Head of caudate nucleus (tissue), 42 donors: ENCODE measurements at regions of chr7 and their contacts with region 1.

Region 1: DNA sequence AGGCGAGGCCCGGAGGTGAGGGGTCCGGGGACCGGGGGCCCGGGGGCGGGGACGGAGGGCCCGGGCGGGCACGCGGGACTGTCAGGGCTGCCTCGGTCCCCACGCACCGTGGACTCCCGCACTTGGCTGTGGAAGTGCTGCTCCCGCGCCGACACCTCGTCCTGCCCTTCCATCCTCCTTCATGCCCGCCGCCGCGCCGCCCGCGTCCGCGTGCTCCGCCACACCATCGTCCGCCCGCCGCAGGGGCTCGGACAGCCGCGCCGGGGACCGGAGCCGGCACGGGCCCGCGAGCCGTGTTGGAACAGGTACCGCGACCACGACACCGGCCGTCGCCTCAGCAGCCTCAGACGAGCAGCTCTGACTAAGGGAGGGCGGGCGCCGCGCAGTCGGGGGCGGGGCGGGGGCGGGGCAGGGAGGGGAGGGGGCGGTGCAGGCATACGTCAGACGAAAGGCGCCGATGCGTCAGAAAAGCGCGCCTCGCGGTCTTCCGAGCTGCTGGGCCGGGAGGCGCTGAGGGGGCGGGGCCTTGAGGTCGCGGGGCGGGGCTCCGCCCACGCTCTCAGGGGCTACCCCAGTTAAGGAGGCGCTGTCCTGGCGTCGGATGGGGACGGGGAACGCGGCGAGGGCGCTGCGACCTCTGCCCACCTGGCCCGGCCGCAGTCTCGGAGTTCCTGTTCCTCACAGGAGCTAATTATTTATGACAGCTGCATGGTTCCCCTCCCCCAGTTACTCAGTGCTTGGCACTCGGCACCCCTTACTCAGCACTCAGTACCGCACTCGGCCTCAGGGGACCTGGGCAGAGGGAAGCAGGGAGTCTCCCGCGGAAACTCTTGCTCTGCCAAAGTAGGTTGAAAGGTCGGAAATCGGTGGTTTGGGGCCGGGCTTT is at the start of gene LMBR1:
- DNase-seq: peak; percentile 83 to 97 (median 94)

Region 2: GRCh38 chr7:156795415-156795814 is 97.6 kb before region 1 on chr7:
- intact Hi-C with region 1: no loop called
- DNase-seq: no peak

Region 3: DNA sequence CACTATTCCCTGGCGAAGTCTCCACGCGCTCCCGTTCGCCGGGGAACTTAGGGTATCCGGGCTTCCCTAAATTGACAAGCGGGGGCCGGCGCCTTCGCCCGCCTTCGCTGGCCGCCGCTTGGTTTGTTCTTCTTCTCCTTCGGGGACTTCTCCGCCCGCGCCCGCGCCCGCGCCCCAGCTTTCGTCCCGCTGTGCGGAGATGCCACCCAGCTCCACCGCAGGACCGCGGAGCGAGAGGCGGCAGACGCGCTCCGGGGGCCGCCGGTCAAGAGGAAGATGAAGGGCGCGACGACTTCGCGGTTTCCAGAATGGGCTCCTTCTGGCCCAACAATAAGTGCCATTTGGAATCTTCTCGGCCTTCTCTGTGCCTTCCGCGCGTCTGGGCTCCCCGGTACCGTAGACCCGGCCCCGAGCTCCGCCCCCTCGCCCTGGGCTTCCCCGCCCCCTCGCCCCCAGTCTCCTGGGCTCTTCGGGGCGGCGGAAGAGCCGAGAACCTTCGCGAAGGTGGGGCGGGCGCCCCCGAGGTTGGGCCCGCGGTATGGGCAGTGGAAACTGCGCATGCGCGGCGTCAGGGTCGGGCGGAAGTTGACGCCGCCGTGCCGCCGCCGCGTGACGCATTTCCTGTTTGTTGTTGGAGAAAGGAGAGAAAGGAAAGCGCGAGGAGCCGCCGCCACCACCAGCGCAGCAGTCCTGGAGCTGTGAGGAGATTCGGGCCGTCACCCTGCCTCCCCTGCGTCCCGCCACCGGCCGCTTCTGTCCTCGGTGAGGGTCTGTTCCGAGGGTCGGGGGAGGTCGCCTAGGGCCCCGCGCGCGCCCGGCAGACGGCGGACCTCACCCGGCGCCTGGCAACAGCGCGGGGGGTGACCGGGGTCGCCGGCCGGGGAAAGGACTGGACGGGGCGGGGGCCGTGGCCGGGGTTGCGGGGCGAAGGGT is 443.6 kb after region 1 on chr7 and contains the start of gene DNAJB6:
- intact Hi-C with region 1: loop called (anchors 10 kb)
- DNase-seq: peak; percentile 77 to 97 (median 92)